HAP-1 (cell line): ENCODE measurements at regions of chr4 and their contacts with region 1.

Region 1: GRCh38 chr4:174362340-174362739 is 78.6 kb downstream of the CEP44 start:
- DNase-seq: no peak
- H3K4me3 ChIP-seq: no peak overlapping the region
- H3K4me1 ChIP-seq: no peaks in the 10 kb centered on the region
- H3K27me3 ChIP-seq: no peaks in the 10 kb centered on the region

Region 2: GRCh38 chr4:174631901-174632758 is 269.8 kb after region 1 on chr4:
- in situ Hi-C with region 1: loop called (anchors 5 kb)
- DNase-seq: peak; percentile 21 to 60
- H3K4me3 ChIP-seq: no peak overlapping the region
- H3K4me1 ChIP-seq: no peaks in the 10 kb centered on the region
- H3K27me3 ChIP-seq: no peaks in the 10 kb centered on the region